SK-N-SH (cell line): ENCODE measurements at regions of chr12 and their contacts with region 1.

Region 1: DNA sequence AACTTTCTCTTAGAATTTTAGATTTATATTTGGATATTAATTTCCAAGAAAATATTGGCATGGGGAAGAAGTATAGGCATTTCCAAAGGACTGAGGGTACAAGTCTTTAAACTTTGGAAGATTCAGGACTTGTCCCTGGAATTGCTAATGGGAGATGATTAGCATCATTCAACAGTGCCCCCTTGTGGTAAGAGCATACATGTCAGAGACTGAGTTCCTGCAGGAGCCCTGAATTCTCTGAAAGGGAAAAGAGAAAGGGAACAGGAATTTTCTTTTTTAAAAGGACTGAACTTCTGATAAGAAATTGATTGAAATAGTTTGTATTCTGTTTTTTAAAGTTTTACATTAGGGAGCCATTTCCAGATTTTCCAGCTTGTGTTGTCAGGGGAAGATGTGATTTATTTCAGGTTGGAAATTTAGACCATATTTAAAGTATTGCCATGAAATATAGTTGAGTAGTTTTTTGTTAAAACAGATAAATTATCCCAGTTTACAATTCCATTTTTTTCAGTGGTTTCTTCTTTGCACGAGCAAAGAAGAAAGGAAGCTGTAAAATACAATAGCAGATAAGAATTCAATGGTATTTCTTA is 44.0 kb upstream of the REP15 start:
- DNase-seq: peak; percentile 54
- H3K4me3 ChIP-seq: peak overlapping the region in 1 of 2 experiments; percentile 51; a peak in 1 of 4 replicates
- H3K27ac ChIP-seq: peak overlapping the region; percentile 62 to 65; a peak in 3 of 4 replicates
- H3K4me1 ChIP-seq: peaks cover 0 to 12% of the 10 kb centered on the region in 2 experiments; a peak in 3 of 4 replicates
- H3K27me3 ChIP-seq: no peaks in the 10 kb centered on the region
- CTCF ChIP-seq: peak; percentile 89
- EP300 ChIP-seq: no peak
- RAD21 ChIP-seq: peak; percentile 81

Region 2: DNA sequence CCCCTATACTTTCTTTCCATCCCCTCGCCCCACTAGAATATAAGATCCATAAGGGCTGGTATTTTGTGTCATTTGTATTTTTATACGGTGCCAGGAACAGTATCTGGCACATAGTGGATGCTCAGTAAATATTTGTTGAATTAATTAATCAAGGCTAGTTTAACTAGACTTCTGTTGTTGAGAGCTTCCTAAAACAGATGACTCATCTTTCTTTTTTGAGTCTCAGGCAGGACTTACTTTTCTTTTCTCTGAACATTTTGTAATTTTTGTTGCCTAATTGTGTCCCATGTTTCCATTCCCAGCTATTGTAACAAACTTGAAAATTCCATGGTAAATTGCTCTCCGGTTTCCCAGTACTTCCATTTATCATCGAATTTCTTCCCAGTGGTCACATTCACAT is 391.5 kb before region 1 on chr12:
- CTCF ChIA-PET with region 1: no interaction called
- POLR2A ChIA-PET with region 1: no interaction called
- DNase-seq: no peak
- H3K4me3 ChIP-seq: no peak overlapping the region
- H3K27ac ChIP-seq: peak overlapping the region in 1 of 2 experiments; percentile 7; a peak in 1 of 4 replicates
- H3K4me1 ChIP-seq: peaks cover 0 to 22% of the 10 kb centered on the region in 2 experiments; a peak in 3 of 4 replicates
- H3K27me3 ChIP-seq: no peaks in the 10 kb centered on the region
- CTCF ChIP-seq: no peak
- EP300 ChIP-seq: no peak
- RAD21 ChIP-seq: no peak

Region 3: GRCh38 chr12:27462151-27462694 is 190.0 kb before region 1 on chr12:
- CTCF ChIA-PET with region 1: no interaction called
- POLR2A ChIA-PET with region 1: no interaction called
- DNase-seq: no peak
- H3K4me3 ChIP-seq: peak overlapping the region; percentile 2 to 27; a peak in 2 of 4 replicates
- H3K27ac ChIP-seq: peak overlapping the region; percentile 48 to 76; a peak in 3 of 4 replicates
- H3K4me1 ChIP-seq: peaks cover 0 to 26% of the 10 kb centered on the region in 2 experiments; a peak in 2 of 4 replicates
- H3K27me3 ChIP-seq: no peaks in the 10 kb centered on the region
- CTCF ChIP-seq: no peak
- EP300 ChIP-seq: peak in 1 of 2 experiments; percentile 60; a peak in 1 of 4 replicates
- RAD21 ChIP-seq: no peak

Region 4: GRCh38 chr12:27667540-27667939 is 15.3 kb after region 1 on chr12:
- CTCF ChIA-PET with region 1: interaction called, 17 read pairs
- POLR2A ChIA-PET with region 1: no interaction called
- DNase-seq: no peak
- H3K4me3 ChIP-seq: no peak overlapping the region
- H3K27ac ChIP-seq: no peak overlapping the region; a peak in 1 of 4 replicates
- H3K4me1 ChIP-seq: no peaks in the 10 kb centered on the region
- H3K27me3 ChIP-seq: no peaks in the 10 kb centered on the region
- CTCF ChIP-seq: no peak
- EP300 ChIP-seq: no peak
- RAD21 ChIP-seq: no peak

Region 5: DNA sequence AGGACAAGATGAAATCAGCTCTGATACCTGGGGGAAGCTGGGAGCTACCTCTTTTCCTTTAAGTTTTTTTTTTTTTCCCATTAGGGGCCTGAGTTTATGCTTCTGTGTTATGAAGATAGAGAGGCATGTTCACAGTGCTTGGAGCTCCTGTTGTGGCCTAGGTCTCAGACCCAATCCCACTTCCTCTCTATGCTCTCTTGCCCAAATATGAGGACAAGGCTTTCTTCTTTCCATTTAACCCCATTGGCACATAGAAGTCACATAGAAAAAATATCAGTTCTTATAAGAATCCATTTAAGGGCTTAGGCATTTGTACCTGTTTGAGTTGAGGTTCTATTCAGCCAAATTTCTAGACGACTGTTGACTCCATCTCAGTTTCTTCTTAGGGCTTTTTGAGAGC is 70.9 kb after region 1 on chr12:
- CTCF ChIA-PET with region 1: no interaction called
- POLR2A ChIA-PET with region 1: no interaction called
- DNase-seq: no peak
- H3K4me3 ChIP-seq: no peak overlapping the region
- H3K27ac ChIP-seq: no peak overlapping the region
- H3K4me1 ChIP-seq: no peaks in the 10 kb centered on the region
- H3K27me3 ChIP-seq: no peaks in the 10 kb centered on the region
- CTCF ChIP-seq: no peak
- EP300 ChIP-seq: no peak
- RAD21 ChIP-seq: no peak